CD4-positive, alpha-beta memory T cell (primary cell): ENCODE measurements at regions of chr6 and their contacts with region 1.

Region 1: DNA sequence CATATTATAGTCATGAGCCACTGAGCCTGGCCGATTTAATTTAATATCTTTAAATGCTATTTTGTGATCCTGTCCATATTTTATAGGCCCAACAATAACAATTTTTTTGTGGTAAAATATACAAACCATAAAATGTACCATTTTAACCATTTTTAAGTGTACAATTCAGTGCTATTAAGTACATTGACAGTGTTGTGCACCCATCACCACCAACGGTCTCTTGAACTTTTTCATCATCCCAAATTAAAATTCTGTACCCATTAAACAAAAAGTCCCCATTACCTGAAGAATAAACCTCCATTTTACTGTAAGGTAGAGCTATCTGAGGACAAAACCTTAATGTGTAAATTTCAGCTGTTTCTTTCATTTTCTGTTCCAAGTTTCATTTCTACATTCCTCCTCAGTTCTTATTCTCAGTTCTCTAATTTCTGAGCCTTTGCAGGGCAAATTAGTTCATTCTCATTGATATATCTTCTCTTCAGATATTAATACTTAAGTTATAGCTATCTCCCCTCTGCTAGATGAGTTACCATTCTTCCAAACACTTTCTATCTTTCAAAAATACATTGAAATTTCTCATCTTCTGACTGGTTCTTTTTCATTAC is 10.3 kb downstream of the MTO1 start:
- DNase-seq: no peak
- H3K4me3 ChIP-seq: no peak overlapping the region
- H3K4me3 Mint-ChIP-seq: peak overlapping the region in 6 of 8 donors; percentile 9 to 76 (median 44)
- H3K27ac ChIP-seq: no peak overlapping the region
- H3K27ac Mint-ChIP-seq: peak overlapping the region; percentile 38 to 90 (median 83)
- H3K4me1 ChIP-seq: peaks cover 12% of the 10 kb centered on the region
- H3K4me1 Mint-ChIP-seq: peaks cover 8 to 22% (median 13%) of the 10 kb centered on the region in 4 donors
- H3K27me3 ChIP-seq: no peaks in the 10 kb centered on the region
- H3K27me3 Mint-ChIP-seq: no peaks in the 10 kb centered on the region

Region 2: GRCh38 chr6:73481969-73482368 is 10.2 kb after region 1 on chr6:
- CTCF ChIA-PET with region 1: interaction called, 3 read pairs
- POLR2A ChIA-PET with region 1: interaction called, 3 read pairs
- intact Hi-C with region 1: loop called (anchors 1 kb)
- DNase-seq: no peak
- H3K4me3 ChIP-seq: no peak overlapping the region
- H3K4me3 Mint-ChIP-seq: no peak overlapping the region
- H3K27ac ChIP-seq: no peak overlapping the region
- H3K27ac Mint-ChIP-seq: peak overlapping the region in 2 of 7 donors; percentile 6 to 64
- H3K4me1 ChIP-seq: no peaks in the 10 kb centered on the region
- H3K4me1 Mint-ChIP-seq: peaks cover 0 to 4% (median 1%) of the 10 kb centered on the region in 4 donors
- H3K27me3 ChIP-seq: no peaks in the 10 kb centered on the region
- H3K27me3 Mint-ChIP-seq: no peaks in the 10 kb centered on the region

Region 3: GRCh38 chr6:73548458-73549446 is 77.0 kb after region 1 on chr6:
- CTCF ChIA-PET with region 1: no interaction called
- POLR2A ChIA-PET with region 1: no interaction called
- intact Hi-C with region 1: no loop called
- DNase-seq: no peak
- H3K4me3 ChIP-seq: no peak overlapping the region
- H3K4me3 Mint-ChIP-seq: no peak overlapping the region
- H3K27ac ChIP-seq: no peak overlapping the region
- H3K27ac Mint-ChIP-seq: no peak overlapping the region
- H3K4me1 ChIP-seq: no peaks in the 10 kb centered on the region
- H3K4me1 Mint-ChIP-seq: no peaks in the 10 kb centered on the region
- H3K27me3 ChIP-seq: no peaks in the 10 kb centered on the region
- H3K27me3 Mint-ChIP-seq: no peaks in the 10 kb centered on the region